PC-3 (cell line): ENCODE measurements at regions of chr16 and their contacts with region 1.

Region 1: DNA sequence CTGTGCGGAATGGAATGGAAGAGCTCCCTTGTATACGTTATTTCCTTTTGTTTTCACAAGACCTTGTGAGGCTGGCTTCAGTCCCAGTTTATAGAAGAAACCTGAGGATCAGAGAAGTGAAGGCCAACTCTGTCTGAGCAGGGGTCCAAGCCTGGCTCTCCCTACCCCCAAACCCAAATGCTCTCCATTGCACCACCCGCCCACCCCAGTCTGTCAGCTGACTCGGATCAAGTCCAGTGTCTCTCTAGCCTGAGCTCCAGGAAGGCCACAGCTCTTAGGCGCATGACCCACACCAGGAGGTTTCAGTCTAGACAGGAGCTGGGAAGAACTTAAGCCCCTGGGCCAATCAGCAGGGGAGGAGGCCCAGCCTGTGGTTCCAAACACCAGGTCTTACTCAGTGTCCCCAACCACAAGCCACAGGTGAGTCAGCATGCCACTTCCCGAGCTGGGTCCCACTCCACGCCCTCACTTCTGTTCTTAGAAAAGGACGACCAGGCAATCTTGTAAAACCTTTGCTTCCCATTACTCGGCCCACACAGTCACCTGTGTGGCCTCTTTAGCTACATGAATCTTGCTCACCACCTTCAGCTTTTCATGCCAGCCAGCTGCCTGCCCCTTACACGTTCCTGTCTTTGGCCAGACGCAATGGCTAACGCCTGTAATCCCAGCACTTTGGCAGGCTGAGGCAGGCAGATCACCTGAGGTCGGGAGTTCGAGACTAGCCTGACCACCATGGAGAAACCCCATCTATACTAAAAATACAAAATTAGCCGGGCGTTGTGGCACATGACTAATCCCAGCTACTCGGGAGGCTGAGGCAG is 27.8 kb downstream of the TK2 start:
- DNase-seq: peak; percentile 95
- ATAC-seq: peak; percentile 94
- H3K4me3 ChIP-seq: no peak overlapping the region
- H3K27ac ChIP-seq: peak overlapping the region; percentile 67
- H3K4me1 ChIP-seq: peaks cover 25% of the 10 kb centered on the region
- H3K27me3 ChIP-seq: no peaks in the 10 kb centered on the region
- CTCF ChIP-seq: no peak

Region 2: GRCh38 chr16:66427036-66427860 is 94.9 kb before region 1 on chr16 and contains the start of gene BEAN1:
- CTCF ChIA-PET with region 1: no interaction called
- POLR2A ChIA-PET with region 1: interaction called, 12 read pairs
- intact Hi-C with region 1: no loop called
- DNase-seq: peak; percentile 17
- ATAC-seq: peak; percentile 84
- H3K4me3 ChIP-seq: peak within 1 kb of the TSS; percentile 50; the same call in 1 of the 2 replicates
- H3K27ac ChIP-seq: no peak within 1 kb of the TSS
- H3K4me1 ChIP-seq: no peaks in the 10 kb centered on the region
- H3K27me3 ChIP-seq: no peaks in the 10 kb centered on the region
- CTCF ChIP-seq: no peak
- total RNA-seq, gene BEAN1: 1.9 and 2.2 TPM in 2 replicates

Region 3: GRCh38 chr16:66474750-66475199 is 47.4 kb before region 1 on chr16:
- CTCF ChIA-PET with region 1: no interaction called
- POLR2A ChIA-PET with region 1: no interaction called
- intact Hi-C with region 1: no loop called
- DNase-seq: peak; percentile 39
- ATAC-seq: no peak
- H3K4me3 ChIP-seq: no peak overlapping the region
- H3K27ac ChIP-seq: no peak overlapping the region
- H3K4me1 ChIP-seq: peaks cover 20% of the 10 kb centered on the region
- H3K27me3 ChIP-seq: no peaks in the 10 kb centered on the region
- CTCF ChIP-seq: no peak

Region 4: DNA sequence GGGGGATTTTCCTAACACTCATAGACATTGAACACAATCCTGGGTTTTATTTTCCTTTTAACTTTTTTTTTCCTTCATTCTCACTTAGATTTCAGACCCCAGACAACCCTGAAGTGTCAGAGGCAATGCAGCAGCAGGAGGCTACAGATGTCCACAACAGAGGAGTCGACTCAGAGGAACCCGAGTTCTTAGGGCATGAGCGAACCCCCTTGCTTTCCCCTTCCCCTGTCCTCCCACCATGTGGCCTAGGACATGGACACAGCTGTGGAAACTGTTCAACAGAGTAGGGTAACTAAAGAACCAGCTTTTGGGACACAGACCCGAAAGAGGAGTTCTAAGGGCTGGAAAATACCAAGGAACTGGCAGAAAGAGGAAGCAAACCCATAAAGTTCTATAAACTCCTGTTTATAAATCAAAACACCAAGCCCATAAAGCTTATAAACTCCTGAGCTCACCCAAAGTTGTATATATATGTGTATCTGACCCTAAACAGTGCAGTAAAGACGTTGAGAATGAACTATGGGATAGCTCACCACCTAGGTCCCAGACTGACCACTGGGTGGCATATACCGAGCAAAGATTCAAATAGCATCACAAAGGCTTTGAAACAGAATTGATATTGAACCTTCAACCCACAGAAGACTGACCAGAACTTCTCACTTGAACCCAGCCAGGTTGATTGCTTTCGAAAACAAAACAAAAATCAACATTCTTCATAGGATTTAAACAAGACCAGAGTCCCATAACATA is 140.5 kb after region 1 on chr16:
- CTCF ChIA-PET with region 1: no interaction called
- POLR2A ChIA-PET with region 1: no interaction called
- intact Hi-C with region 1: no loop called
- DNase-seq: peak; percentile 36
- ATAC-seq: peak; percentile 65
- H3K4me3 ChIP-seq: no peak overlapping the region
- H3K27ac ChIP-seq: no peak overlapping the region
- H3K4me1 ChIP-seq: peaks cover 21% of the 10 kb centered on the region
- H3K27me3 ChIP-seq: no peaks in the 10 kb centered on the region
- CTCF ChIP-seq: peak; percentile 67